Activated naive CD4-positive, alpha-beta T cell treated with anti-CD3 and anti-CD28 coated beads for 36 hours (primary cell): ENCODE measurements at regions of chr10 and their contacts with region 1.

Region 1: DNA sequence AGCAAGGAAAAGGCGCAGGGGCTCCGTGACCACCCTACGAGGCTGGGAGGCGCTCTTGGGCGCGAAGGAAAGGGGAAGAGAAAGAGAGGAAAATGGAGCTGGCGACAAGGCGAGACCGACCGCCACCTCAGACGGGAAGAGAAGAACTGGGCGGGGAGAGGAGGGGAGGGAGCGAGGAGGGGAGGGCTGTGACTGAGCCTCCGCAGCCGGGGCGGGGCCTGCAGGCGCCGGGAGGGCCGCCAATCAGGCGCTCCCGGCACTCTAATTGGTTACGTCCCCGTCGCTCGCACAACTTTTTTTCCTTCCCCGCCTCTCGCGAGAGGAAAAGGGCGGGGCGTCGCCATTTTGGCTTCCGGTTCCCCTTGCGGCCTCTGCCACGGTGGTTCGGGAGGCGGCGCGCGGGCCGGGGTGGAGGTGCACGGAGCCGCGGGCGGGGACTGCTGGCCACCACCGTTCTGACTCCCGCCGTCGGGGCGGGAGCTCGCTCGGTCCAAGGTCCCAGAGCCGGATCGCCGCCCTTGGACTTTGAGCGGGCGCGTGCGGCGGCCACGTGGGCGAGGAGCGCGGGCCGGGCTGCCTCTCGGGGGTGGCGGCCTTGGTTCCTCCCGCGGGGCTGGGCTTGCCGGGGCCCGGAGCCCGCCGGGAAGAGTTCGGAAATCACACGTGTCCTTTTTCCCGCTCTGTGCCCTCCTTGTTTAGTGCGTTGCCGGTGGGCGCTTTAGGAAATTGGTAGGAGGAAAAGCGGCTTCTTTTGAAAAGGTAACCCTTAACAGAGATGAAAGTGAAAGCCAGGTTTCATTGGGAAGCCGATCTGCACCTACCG is at the start of gene GDI2:
- DNase-seq: peak; percentile 98
- H3K4me3 Mint-ChIP-seq: peak within 1 kb of the TSS; percentile 84
- H3K27ac Mint-ChIP-seq: peak within 1 kb of the TSS; percentile 90
- H3K4me1 Mint-ChIP-seq: peaks cover 66% of the 10 kb centered on the region
- H3K27me3 Mint-ChIP-seq: no peaks in the 10 kb centered on the region
- total RNA-seq, gene GDI2: 277 to 288 TPM

Region 2: DNA sequence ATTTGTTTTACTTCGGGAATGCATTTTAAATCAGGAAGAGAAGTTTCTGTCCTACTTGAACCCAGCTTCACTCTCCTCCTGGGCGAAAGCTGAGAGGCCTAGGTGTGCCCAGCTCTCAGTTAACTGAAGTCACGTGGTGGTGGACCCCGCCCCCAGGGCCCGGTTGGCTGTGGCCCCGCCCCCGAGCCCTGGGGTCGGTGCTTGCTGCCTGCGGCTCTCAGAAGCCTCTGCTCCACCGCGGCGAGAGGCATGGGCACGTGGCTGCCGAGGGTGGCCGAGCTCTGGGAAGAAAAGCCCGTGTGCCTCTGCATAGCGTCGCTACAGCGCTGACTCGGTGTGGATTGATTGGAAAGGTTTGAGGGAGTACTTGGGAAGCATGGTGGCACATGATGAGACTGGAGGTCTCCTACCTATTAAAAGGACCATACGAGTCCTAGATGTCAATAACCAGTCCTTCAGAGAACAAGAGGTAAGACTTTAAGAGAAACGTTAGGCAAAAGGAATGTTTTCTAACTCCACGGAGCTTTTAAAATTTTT is 367.0 kb before region 1 on chr10:
- CTCF ChIA-PET with region 1: interaction called, 3 read pairs
- intact Hi-C with region 1: loop called (anchors 2 kb)
- DNase-seq: peak; percentile 77
- H3K4me3 Mint-ChIP-seq: peak overlapping the region; percentile 61
- H3K27ac Mint-ChIP-seq: peak overlapping the region; percentile 33
- H3K4me1 Mint-ChIP-seq: peaks cover 48% of the 10 kb centered on the region
- H3K27me3 Mint-ChIP-seq: no peaks in the 10 kb centered on the region

Region 3: DNA sequence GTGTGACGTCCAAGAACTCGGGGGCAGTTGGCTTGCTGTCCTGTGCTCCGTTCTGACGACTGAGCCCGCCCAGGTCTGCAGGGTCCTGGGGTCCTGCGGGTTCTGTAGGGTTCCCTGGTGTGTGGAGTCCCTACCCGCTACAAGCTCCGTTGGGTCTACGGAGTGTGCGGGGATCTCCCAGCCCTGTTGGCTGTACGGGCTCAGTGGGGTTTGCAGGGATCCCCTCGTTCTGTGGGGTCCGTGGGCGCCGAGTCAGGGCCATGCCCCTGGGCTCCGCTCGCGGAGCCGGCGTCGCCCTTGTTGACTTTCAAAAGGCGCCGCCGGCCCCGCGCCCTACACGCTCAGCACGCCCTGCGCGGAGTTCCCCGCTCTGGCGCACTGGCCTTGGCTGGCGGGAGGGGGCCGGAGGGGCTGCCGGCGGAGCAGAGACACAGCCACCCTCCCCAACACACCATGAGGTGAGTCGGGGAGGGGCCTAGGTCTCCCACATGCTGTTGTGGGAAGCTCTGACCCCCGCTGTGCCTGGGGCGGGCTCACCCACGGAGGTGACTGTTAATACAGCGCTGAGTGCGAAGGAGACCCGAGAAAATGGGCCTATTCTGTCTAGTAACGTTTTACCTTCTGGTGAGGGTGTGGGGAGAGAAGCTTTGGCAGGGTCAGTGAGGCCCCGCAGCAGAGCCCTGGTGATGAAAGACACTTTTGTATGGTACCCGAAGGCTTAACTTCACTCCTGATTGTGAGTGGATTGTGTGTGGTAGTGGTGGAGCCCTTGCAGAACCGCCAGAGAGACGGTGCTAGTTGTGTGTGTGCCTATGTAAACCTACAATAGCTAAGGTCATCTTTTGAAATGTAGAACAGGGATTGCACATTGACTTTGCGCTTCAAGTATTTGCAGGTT is 120.8 kb before region 1 on chr10:
- CTCF ChIA-PET with region 1: no interaction called
- intact Hi-C with region 1: loop called (anchors 2 kb)
- DNase-seq: peak; percentile 77
- H3K4me3 Mint-ChIP-seq: peak overlapping the region; percentile 68
- H3K27ac Mint-ChIP-seq: peak overlapping the region; percentile 76
- H3K4me1 Mint-ChIP-seq: peaks cover 74% of the 10 kb centered on the region
- H3K27me3 Mint-ChIP-seq: no peaks in the 10 kb centered on the region

Region 4: GRCh38 chr10:5835446-5836095 is 22.1 kb after region 1 on chr10:
- CTCF ChIA-PET with region 1: no interaction called
- intact Hi-C with region 1: no loop called
- DNase-seq: no peak
- H3K4me3 Mint-ChIP-seq: no peak overlapping the region
- H3K27ac Mint-ChIP-seq: no peak overlapping the region
- H3K4me1 Mint-ChIP-seq: no peaks in the 10 kb centered on the region
- H3K27me3 Mint-ChIP-seq: no peaks in the 10 kb centered on the region

Region 5: GRCh38 chr10:5873515-5873995 is 60.1 kb after region 1 on chr10:
- CTCF ChIA-PET with region 1: interaction called, 5 read pairs
- intact Hi-C with region 1: loop called (anchors 2 kb)
- DNase-seq: peak; percentile 85
- H3K4me3 Mint-ChIP-seq: peak overlapping the region; percentile 44
- H3K27ac Mint-ChIP-seq: no peak overlapping the region
- H3K4me1 Mint-ChIP-seq: peaks cover 3% of the 10 kb centered on the region
- H3K27me3 Mint-ChIP-seq: no peaks in the 10 kb centered on the region

Region 6: GRCh38 chr10:5977471-5978229 is 164.2 kb after region 1 on chr10 and contains the start of gene IL15RA:
- CTCF ChIA-PET with region 1: no interaction called
- intact Hi-C with region 1: loop called (anchors 1 kb)
- DNase-seq: peak; percentile 91
- H3K4me3 Mint-ChIP-seq: peak within 1 kb of the TSS; percentile 97
- H3K27ac Mint-ChIP-seq: peak within 1 kb of the TSS; percentile 97
- H3K4me1 Mint-ChIP-seq: peaks cover 24% of the 10 kb centered on the region
- H3K27me3 Mint-ChIP-seq: no peaks in the 10 kb centered on the region
- total RNA-seq, gene IL15RA: 14.7 to 16.3 TPM